Activated T-helper 1 cell treated with anti-CD3 and anti-CD28 coated beads, Interleukin-12 subunit alpha, Interleukin-12 subunit beta, Interleukin-2, Interleukin-4 antibody, amounts not matched to agents 30 ng/mL and 10 ng/mL and 1 ng/mL, durations not matched to agents 14 hours and 24 hours and 36 hours (primary cell): ENCODE measurements at regions of chr12 and their contacts with region 1.

Region 1: DNA sequence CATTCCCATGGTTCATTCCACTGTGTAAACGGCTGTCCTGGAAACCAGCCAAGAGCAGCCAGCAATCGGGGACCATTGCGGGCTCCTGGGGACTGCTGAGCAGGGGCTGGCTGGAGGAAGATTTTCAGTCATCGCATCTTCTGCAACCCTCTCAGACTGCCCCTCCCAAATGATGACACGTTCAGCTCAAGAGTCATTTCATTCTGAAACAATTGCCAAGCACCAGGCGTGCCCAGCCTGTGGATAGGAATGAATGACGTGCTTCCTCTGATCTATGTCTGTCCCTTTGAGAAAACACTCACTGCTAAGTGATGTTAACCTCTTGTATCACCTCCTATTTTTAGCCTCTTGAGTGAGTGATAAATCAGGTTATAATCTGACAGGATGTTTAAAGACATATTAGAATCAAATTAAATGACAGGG is 62.0 kb downstream of the NDUFA12 start:
- DNase-seq: peak; percentile 39
- H3K4me3 Mint-ChIP-seq: no peak overlapping the region
- H3K27ac Mint-ChIP-seq: peak overlapping the region; percentile 63
- H3K4me1 Mint-ChIP-seq: peaks cover 43% of the 10 kb centered on the region
- H3K27me3 Mint-ChIP-seq: no peaks in the 10 kb centered on the region

Region 2: DNA sequence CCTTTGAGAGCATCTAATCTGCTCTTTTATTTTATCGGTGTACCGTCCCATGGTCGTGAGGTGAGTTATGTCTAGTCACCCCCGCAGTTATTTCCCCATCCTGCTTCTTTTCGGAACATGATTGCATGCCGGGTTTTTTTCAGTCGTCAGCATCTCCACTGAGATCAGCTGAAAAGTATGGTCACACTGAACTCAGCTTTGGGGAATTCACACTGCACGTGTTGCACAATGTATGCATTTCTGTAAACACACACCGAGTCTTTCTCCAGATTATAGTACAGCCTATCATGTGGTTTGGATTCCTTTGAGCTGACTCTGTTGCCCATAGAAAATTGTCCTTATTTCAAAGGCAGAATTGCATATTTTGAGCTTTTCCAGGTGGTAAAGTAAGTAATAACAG is 768.5 kb before region 1 on chr12:
- intact Hi-C with region 1: loop called (anchors 10 kb)
- DNase-seq: no peak
- H3K4me3 Mint-ChIP-seq: no peak overlapping the region
- H3K27ac Mint-ChIP-seq: no peak overlapping the region
- H3K4me1 Mint-ChIP-seq: peaks cover 66% of the 10 kb centered on the region
- H3K27me3 Mint-ChIP-seq: peaks cover 2% of the 10 kb centered on the region

Region 3: DNA sequence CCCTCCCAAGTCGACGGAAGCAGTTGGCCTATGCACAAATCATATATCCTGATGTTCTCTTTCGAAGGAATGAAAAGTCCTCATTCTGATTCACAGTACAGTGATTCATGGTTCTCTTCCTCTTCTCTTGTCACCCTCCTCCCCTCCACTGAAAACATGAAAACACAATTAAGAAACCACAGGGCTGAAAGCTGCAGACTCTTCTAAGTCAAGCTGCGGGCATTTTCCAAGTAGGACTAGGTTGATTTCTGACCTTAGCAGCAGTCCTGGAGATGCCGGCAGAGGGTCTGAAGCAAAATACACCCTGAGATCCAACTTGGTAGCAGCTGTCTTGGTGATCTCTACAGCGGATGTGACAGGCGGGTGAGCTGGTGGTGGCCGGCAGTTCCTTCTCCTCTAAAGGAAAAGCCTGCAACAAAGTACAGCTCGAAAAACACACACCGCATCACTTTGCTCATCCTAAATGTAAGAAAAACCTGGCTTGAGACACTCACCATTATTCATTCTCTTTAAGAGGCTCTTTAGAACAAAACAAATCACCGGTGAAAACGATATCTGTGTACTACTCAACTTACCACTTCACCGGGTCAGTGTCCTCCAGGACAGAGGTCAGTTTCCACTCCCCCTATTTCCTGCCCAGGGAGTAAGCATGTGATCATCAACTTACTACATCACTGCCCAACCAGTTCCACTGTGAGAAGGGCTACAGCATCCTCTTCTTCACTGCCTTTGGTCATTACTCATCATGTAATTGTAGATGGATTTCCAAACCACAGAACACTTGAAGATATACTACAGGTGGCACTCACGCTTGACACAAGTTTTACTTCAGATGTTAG is 297.1 kb before region 1 on chr12:
- intact Hi-C with region 1: loop called (anchors 1 kb)
- DNase-seq: no peak
- H3K4me3 Mint-ChIP-seq: peak overlapping the region; percentile 63
- H3K27ac Mint-ChIP-seq: peak overlapping the region; percentile 7
- H3K4me1 Mint-ChIP-seq: peaks cover 46% of the 10 kb centered on the region
- H3K27me3 Mint-ChIP-seq: peaks cover 68% of the 10 kb centered on the region

Region 4: GRCh38 chr12:94987801-94988200 is 46.4 kb after region 1 on chr12:
- intact Hi-C with region 1: loop called (anchors 5 kb)
- DNase-seq: no peak
- H3K4me3 Mint-ChIP-seq: no peak overlapping the region
- H3K27ac Mint-ChIP-seq: no peak overlapping the region
- H3K4me1 Mint-ChIP-seq: peaks cover 50% of the 10 kb centered on the region
- H3K27me3 Mint-ChIP-seq: no peaks in the 10 kb centered on the region

Region 5: DNA sequence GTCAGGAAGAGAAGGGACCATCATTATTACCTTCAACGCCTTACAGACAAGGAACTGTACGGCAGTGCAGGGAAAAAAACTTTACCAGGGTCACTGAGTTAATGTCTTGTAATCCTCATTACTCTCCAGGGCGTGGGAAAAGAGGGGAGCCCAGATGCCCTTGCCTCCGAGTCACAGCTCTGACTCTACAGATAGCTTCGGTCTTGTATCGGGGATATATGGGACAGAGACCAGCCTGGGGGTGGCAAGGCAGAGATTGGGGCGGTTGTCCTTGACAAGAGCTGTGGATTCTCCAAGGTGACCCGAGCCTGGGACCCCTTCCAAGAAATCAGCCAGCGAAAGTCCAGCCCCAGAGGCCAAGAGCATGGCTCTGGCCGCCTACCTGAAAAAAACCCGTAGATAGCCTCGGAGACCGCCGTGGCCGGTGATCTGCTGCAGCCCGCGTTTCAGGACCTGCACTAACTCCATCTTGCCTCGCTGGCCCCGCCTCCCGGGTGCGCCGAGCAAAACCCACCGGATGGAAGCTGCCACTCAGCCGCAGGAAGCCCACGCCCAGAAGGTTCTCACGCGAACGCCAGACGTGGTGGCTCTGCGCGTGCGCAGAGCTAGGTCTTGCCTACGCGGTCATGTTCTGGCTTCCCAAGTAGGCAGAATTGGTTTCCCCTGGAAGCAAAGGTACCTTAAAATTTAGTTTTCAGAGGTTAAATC is 61.9 kb after region 1 on chr12 and contains the start of gene NDUFA12:
- intact Hi-C with region 1: loop called (anchors 1 kb)
- DNase-seq: peak; percentile 94
- H3K4me3 Mint-ChIP-seq: peak within 1 kb of the TSS; percentile 95
- H3K27ac Mint-ChIP-seq: peak within 1 kb of the TSS; percentile 93
- H3K4me1 Mint-ChIP-seq: peaks cover 30% of the 10 kb centered on the region
- H3K27me3 Mint-ChIP-seq: no peaks in the 10 kb centered on the region
- total RNA-seq, gene NDUFA12: 113 TPM in 2 replicates

Region 6: GRCh38 chr12:95102916-95103671 is 161.6 kb after region 1 on chr12:
- intact Hi-C with region 1: loop called (anchors 1 kb)
- DNase-seq: peak; percentile 39
- H3K4me3 Mint-ChIP-seq: no peak overlapping the region
- H3K27ac Mint-ChIP-seq: peak overlapping the region; percentile 20
- H3K4me1 Mint-ChIP-seq: peaks cover 10% of the 10 kb centered on the region
- H3K27me3 Mint-ChIP-seq: no peaks in the 10 kb centered on the region